ENCODE measurements at regions of chr10 and their contacts with region 1.

Region 1: GRCh38 chr10:128633864-128634540 is 507.8 kb upstream of the MKI67 start:
- DNase-seq: peak; percentile 33
- H3K4me3 Mint-ChIP-seq: no peak overlapping the region
- H3K27ac Mint-ChIP-seq: no peak overlapping the region
- H3K4me1 Mint-ChIP-seq: no peaks in the 10 kb centered on the region
- H3K27me3 Mint-ChIP-seq: peaks cover 6% of the 10 kb centered on the region

Region 2: GRCh38 chr10:128614802-128615553 is 19.0 kb before region 1 on chr10:
- intact Hi-C with region 1: no loop called
- DNase-seq: peak; percentile 14
- H3K4me3 Mint-ChIP-seq: no peak overlapping the region
- H3K27ac Mint-ChIP-seq: no peak overlapping the region
- H3K4me1 Mint-ChIP-seq: no peaks in the 10 kb centered on the region
- H3K27me3 Mint-ChIP-seq: no peaks in the 10 kb centered on the region

Region 3: GRCh38 chr10:128855618-128856428 is 221.8 kb after region 1 on chr10:
- intact Hi-C with region 1: loop called (anchors 2 kb)
- DNase-seq: no peak
- H3K4me3 Mint-ChIP-seq: no peak overlapping the region
- H3K27ac Mint-ChIP-seq: no peak overlapping the region
- H3K4me1 Mint-ChIP-seq: no peaks in the 10 kb centered on the region
- H3K27me3 Mint-ChIP-seq: no peaks in the 10 kb centered on the region

Region 4: DNA sequence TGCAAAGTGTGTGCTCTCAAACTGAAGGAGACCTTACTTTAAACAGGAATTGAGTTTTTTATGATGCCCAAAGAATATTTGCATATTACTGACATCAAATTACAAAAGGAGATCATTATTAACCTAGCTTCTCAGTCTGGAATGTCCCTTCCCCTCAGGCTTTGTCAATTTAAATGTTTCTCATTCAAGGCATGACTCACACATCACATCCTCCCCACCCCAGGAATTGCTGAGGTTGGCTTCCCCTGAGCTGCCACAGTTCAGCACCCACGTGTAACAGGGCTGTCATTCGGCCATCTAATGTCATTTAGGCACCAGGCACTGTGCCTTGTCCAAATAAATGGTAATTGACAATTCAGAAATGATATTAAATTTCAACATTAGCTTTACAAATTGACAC is 527.1 kb after region 1 on chr10:
- intact Hi-C with region 1: no loop called
- DNase-seq: no peak
- H3K4me3 Mint-ChIP-seq: no peak overlapping the region
- H3K27ac Mint-ChIP-seq: no peak overlapping the region
- H3K4me1 Mint-ChIP-seq: peaks cover 4% of the 10 kb centered on the region
- H3K27me3 Mint-ChIP-seq: peaks cover 2% of the 10 kb centered on the region